CD4-positive, alpha-beta memory T cell (primary cell): ENCODE measurements at regions of chr12 and their contacts with region 1.

Region 1: DNA sequence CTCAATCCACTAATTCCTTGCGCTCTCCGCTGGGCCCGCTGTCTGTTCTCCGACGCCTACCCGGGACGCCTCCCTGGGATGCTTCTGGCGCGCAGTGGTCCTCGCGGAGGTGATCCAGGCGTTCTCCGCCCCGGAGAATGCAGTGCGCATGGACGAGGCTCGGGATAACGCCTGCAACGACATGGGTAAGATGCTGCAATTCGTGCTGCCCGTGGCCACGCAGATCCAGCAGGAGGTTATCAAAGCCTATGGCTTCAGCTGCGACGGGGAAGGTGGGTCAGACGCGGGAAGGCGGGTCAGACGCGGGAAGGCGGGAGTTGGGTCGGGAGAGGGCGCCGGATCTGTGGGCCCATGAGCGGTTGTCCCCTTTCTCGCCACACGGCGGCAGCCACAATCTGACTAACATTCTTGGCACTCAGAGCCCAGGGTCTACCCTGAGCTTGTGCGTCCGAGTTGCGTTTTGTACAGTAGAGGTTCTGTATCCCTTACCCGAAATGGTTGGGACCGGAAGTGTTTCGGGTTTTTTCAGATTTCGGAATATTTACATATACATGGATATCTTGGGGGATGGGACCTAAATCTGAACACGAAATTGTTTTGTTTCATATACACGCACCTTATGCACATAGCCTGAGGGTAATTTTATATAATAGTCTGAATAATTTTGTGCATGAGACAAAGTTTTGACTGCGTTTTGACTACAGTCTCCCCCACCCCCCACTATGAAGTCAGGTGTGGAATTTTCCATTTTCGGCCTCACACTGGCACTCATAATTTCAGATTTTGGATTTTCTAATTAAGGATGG is 762 bp downstream of the C12orf57 start:
- DNase-seq: peak; percentile 84 to 90 (median 85)
- H3K4me3 ChIP-seq: peak overlapping the region; percentile 87 to 90
- H3K4me3 Mint-ChIP-seq: peak overlapping the region; percentile 91 to 99 (median 98)
- H3K27ac ChIP-seq: peak overlapping the region; percentile 91
- H3K27ac Mint-ChIP-seq: peak overlapping the region; percentile 95 to 100 (median 98)
- H3K4me1 ChIP-seq: peaks cover 66% of the 10 kb centered on the region
- H3K4me1 Mint-ChIP-seq: peaks cover 37 to 74% (median 60%) of the 10 kb centered on the region in 4 donors
- H3K27me3 ChIP-seq: no peaks in the 10 kb centered on the region
- H3K27me3 Mint-ChIP-seq: no peaks in the 10 kb centered on the region

Region 2: GRCh38 chr12:6867413-6868210 is 77.0 kb before region 1 on chr12 and contains the start of gene TPI1:
- CTCF ChIA-PET with region 1: interaction called, 54 read pairs
- POLR2A ChIA-PET with region 1: interaction called, 70 read pairs
- intact Hi-C with region 1: loop called (anchors 1 kb)
- DNase-seq: peak; percentile 59 to 68 (median 62)
- H3K4me3 ChIP-seq: peak within 1 kb of the TSS; percentile 36 to 67
- H3K4me3 Mint-ChIP-seq: peak within 1 kb of the TSS; percentile 89 to 96 (median 92)
- H3K27ac ChIP-seq: peak within 1 kb of the TSS; percentile 69
- H3K27ac Mint-ChIP-seq: peak within 1 kb of the TSS; percentile 91 to 97 (median 93)
- H3K4me1 ChIP-seq: peaks cover 51% of the 10 kb centered on the region
- H3K4me1 Mint-ChIP-seq: peaks cover 33 to 58% (median 48%) of the 10 kb centered on the region in 4 donors
- H3K27me3 ChIP-seq: no peaks in the 10 kb centered on the region
- H3K27me3 Mint-ChIP-seq: no peaks in the 10 kb centered on the region
- total RNA-seq, gene TPI1: 155 to 164 TPM

Region 3: GRCh38 chr12:6914246-6914946 is 30.2 kb before region 1 on chr12 and contains the start of gene ENO2:
- CTCF ChIA-PET with region 1: interaction called, 3 read pairs
- POLR2A ChIA-PET with region 1: interaction called, 41 read pairs
- intact Hi-C with region 1: loop called (anchors 1 kb)
- DNase-seq: peak; percentile 83 to 93 (median 85)
- H3K4me3 ChIP-seq: peak within 1 kb of the TSS; percentile 69 to 76
- H3K4me3 Mint-ChIP-seq: peak within 1 kb of the TSS; percentile 90 to 98 (median 96)
- H3K27ac ChIP-seq: peak within 1 kb of the TSS; percentile 77
- H3K27ac Mint-ChIP-seq: peak within 1 kb of the TSS; percentile 88 to 98 (median 96)
- H3K4me1 ChIP-seq: peaks cover 29% of the 10 kb centered on the region
- H3K4me1 Mint-ChIP-seq: peaks cover 12 to 44% (median 27%) of the 10 kb centered on the region in 4 donors
- H3K27me3 ChIP-seq: no peaks in the 10 kb centered on the region
- H3K27me3 Mint-ChIP-seq: no peaks in the 10 kb centered on the region
- total RNA-seq, gene ENO2: 187 to 190 TPM

Region 4: GRCh38 chr12:6927379-6928024 is 17.1 kb before region 1 on chr12 and contains the start of gene ATN1:
- CTCF ChIA-PET with region 1: interaction called, 77 read pairs
- POLR2A ChIA-PET with region 1: interaction called, 280 read pairs
- intact Hi-C with region 1: loop called (anchors 1 kb)
- DNase-seq: peak; percentile 37 to 65 (median 45)
- H3K4me3 ChIP-seq: peak within 1 kb of the TSS; percentile 57 to 65
- H3K4me3 Mint-ChIP-seq: peak within 1 kb of the TSS; percentile 88 to 94 (median 90)
- H3K27ac ChIP-seq: peak within 1 kb of the TSS; percentile 67
- H3K27ac Mint-ChIP-seq: peak within 1 kb of the TSS; percentile 91 to 97 (median 94)
- H3K4me1 ChIP-seq: peaks cover 43% of the 10 kb centered on the region
- H3K4me1 Mint-ChIP-seq: peaks cover 31 to 57% (median 43%) of the 10 kb centered on the region in 4 donors
- H3K27me3 ChIP-seq: no peaks in the 10 kb centered on the region
- H3K27me3 Mint-ChIP-seq: no peaks in the 10 kb centered on the region
- total RNA-seq, gene ATN1: 32.2 to 33.0 TPM

Region 5: DNA sequence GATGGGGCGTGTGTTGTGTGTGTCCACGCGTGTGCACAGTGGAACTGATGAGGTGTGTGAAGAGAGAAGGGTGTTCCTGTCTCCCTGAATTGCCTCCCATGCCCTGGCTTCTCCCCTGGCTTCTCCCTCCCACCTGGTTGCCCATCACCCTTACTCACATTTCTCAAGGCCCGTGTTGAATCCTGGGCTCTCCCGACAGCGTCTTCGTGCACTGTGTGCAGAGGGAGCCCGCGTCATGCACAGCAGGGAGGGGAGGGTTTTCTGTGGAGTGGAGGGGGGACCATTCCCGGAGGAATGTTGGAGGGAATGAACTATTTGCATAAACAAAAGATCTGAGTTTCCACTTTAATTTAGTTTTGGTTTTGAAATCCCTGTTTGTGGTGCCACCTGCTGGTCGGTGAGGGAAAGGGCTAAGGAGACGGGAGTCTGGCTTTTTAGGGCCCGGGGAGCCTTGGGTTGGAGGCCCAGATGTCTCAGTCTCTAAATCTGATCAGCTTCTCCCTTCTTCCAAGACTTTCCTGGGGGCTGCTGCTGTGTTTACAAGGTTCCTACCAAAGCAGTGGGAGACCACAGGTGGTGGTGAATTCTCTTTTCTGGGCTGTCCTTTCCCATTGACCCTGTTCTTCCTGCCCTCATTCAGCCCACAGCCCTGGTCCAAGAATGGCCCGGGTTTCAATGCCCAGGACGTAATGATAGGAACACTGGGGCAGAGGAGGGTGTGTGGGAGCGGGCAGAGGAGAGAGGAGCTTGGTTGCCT is 147.8 kb after region 1 on chr12 and contains the start of gene C1R:
- CTCF ChIA-PET with region 1: interaction called, 7 read pairs
- POLR2A ChIA-PET with region 1: interaction called, 7 read pairs
- intact Hi-C with region 1: loop called (anchors 1 kb)
- DNase-seq: peak; percentile 60 to 71 (median 63)
- H3K4me3 ChIP-seq: peak within 1 kb of the TSS in 1 of 2 donors; percentile 56
- H3K4me3 Mint-ChIP-seq: peak within 1 kb of the TSS; percentile 70 to 90 (median 86)
- H3K27ac ChIP-seq: peak within 1 kb of the TSS; percentile 44
- H3K27ac Mint-ChIP-seq: peak within 1 kb of the TSS in 5 of 7 donors; percentile 57 to 89 (median 84)
- H3K4me1 ChIP-seq: peaks cover 15% of the 10 kb centered on the region
- H3K4me1 Mint-ChIP-seq: peaks cover 6 to 12% (median 8%) of the 10 kb centered on the region in 4 donors
- H3K27me3 ChIP-seq: no peaks in the 10 kb centered on the region
- H3K27me3 Mint-ChIP-seq: no peaks in the 10 kb centered on the region
- total RNA-seq, gene C1R: 0.86 to 2.3 TPM

Region 6: DNA sequence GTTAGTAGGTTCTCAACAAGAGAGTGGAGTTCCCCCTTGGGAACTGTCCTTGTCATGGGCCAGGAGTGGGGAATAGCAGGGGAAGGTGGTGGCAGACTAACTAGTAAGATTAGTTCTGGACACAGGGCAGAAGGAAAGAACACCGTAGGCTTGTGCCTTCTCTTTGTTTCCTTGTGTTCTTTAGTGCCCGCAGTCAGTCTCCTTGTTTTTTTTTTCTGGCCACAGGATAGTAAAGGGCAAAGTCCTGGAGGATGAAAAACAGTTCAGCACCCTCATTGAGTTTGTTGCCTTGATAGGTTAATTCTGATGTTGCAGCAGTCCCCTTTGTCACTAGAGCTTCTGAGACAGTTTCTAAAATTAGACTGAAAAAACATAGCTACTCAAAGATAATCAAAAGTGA is 253.3 kb after region 1 on chr12:
- CTCF ChIA-PET with region 1: no interaction called
- POLR2A ChIA-PET with region 1: no interaction called
- intact Hi-C with region 1: no loop called
- DNase-seq: no peak
- H3K4me3 ChIP-seq: no peak overlapping the region
- H3K4me3 Mint-ChIP-seq: no peak overlapping the region
- H3K27ac ChIP-seq: no peak overlapping the region
- H3K27ac Mint-ChIP-seq: peak overlapping the region in 2 of 7 donors; percentile 1 to 12
- H3K4me1 ChIP-seq: peaks cover 5% of the 10 kb centered on the region
- H3K4me1 Mint-ChIP-seq: peaks cover 7 to 22% (median 16%) of the 10 kb centered on the region in 4 donors
- H3K27me3 ChIP-seq: no peaks in the 10 kb centered on the region
- H3K27me3 Mint-ChIP-seq: no peaks in the 10 kb centered on the region